ENCODE measurements at regions of chr10 and their contacts with region 1.

Region 1: GRCh38 chr10:16663444-16663843 is 141.8 kb upstream of the C1QL3 start:
- DNase-seq: no peak

Region 2: GRCh38 chr10:17144757-17145156 is 481.3 kb after region 1 on chr10:
- intact Hi-C with region 1: loop called in 1 of 2 experiments (anchors 5 kb)
- DNase-seq: no peak